Activated T-helper 2 cell treated with anti-CD3 and anti-CD28 coated beads, Interferon-gamma antibody, Interleukin-2, Interleukin-4, amounts not matched to agents 10 μg/mL and 5 μg/mL and 100 μg/mL, durations not matched to agents 14 hours and 24 hours and 36 hours (primary cell): ENCODE measurements at regions of chr14 and their contacts with region 1.

Region 1: DNA sequence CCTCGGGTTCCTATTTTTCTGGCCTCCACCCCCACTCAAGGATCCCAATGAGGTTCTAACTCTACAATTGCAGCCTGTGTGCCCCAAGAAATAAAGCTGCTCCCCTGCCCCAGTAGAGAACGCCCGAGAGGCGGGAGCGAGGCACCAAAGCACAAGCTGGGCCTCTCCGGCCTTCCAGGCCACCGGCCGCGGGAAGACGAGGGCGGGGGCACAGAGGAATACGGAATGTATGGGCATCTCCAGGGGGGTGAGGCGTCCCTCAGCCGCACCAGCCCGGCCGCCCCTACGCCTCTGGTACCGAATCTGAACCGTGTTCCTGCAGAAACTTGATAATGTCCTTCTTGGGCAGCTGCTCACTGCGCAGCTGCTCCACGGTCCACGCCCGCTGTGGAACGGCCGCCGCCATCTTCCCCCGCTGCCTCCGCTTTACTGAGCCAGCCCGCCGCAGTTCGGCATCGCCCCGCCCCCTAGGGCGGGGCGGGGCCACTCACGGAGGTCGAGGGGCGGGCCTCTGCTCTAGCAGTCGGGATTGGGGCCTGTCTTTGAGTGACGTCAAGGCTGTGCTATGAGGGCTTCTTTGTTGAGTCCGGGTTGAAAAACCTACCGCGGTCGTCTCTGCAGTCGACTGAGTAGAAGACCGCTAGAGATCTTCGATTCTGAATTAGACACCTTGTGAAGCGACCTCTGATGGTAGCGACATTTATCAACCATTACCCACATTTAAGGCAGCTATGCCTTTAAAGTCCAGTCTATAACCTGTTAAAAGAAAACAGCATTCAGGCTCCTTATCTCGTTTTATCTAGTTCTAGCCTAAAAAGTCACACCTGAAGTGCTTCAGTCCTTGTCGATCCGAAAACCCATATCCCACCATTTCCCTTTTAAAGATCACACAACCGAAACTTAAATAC is at the start of gene FKBP3:
- DNase-seq: peak; percentile 93
- H3K4me3 Mint-ChIP-seq: peak within 1 kb of the TSS; percentile 92
- H3K27ac Mint-ChIP-seq: peak within 1 kb of the TSS; percentile 98
- H3K4me1 Mint-ChIP-seq: peaks cover 30% of the 10 kb centered on the region
- H3K27me3 Mint-ChIP-seq: no peaks in the 10 kb centered on the region
- total RNA-seq, gene FKBP3: 78.7 and 79.1 TPM in 2 replicates

Region 2: DNA sequence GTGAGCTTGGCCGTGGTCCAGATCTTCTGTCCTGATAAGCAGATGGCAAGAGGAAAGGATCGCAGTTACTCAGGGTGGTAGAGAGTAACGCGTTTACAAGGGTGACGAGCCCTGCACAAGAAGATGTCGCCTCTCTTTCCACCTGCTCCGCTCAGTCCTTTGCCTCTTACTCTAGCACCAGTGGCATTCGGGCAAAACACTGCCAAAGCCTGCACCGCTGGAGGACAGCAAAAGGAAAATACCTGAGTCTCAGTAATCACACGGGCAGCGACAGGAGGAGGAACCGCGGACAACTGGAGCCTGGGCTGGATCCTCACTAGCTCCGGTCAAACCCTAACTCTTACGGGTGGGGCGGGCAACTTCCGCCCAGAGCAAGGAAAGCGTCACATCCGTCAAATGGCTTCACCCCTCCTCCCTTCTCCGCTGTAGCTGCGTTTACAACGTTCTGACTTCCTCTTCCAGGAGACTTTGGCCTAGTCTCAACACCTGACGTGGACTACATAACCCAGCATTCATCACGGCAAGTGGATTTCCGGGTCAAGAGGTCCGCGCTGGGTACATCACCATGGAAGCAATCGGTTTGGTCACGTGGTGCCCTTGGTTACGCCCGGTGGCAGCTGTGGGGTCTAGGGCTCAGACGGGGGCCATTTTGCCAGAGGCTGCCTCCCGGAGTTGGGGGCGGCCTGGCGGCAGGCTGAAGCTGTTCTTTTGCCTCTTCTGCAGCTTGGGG is 172.5 kb before region 1 on chr14 and contains the starts of genes KLHL28 and TOGARAM1:
- intact Hi-C with region 1: loop called (anchors 1 kb)
- DNase-seq: peak; percentile 95
- H3K4me3 Mint-ChIP-seq: no peak within 1 kb of the TSS
- H3K27ac Mint-ChIP-seq: no peak within 1 kb of the TSS
- H3K4me1 Mint-ChIP-seq: peaks cover 40% of the 10 kb centered on the region
- H3K27me3 Mint-ChIP-seq: no peaks in the 10 kb centered on the region
- total RNA-seq, gene KLHL28: 17.3 and 17.4 TPM in 2 replicates
- total RNA-seq, gene TOGARAM1: 7.3 and 11.1 TPM in 2 replicates

Region 3: DNA sequence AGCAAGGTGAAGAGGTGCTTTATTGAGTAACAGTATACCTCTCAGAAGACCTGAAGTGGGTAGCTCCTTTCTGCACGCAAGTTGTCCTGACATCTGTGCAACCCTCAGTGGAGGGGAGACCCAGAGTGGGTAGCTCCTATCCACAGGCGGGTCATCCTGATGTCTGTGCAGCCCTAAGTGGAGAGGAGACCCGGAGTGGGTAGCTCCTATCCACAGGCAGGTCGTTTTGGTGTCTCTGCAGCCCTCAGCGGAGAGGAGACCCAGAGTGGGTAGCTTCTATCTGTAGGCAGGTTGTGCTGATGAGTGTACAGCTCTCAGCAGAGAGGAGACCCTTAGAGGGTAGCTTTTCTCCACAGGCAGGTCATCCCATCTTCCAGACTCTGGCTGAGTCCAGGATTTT is 95.4 kb before region 1 on chr14:
- intact Hi-C with region 1: no loop called
- DNase-seq: no peak
- H3K4me3 Mint-ChIP-seq: no peak overlapping the region
- H3K27ac Mint-ChIP-seq: no peak overlapping the region
- H3K4me1 Mint-ChIP-seq: no peaks in the 10 kb centered on the region
- H3K27me3 Mint-ChIP-seq: no peaks in the 10 kb centered on the region

Region 4: GRCh38 chr14:45089813-45090212 is 44.5 kb before region 1 on chr14:
- intact Hi-C with region 1: loop called (anchors 1 kb)
- DNase-seq: no peak
- H3K4me3 Mint-ChIP-seq: no peak overlapping the region
- H3K27ac Mint-ChIP-seq: peak overlapping the region; percentile 64
- H3K4me1 Mint-ChIP-seq: peaks cover 57% of the 10 kb centered on the region
- H3K27me3 Mint-ChIP-seq: no peaks in the 10 kb centered on the region

Region 5: GRCh38 chr14:45201905-45202304 is 67.6 kb after region 1 on chr14:
- intact Hi-C with region 1: loop called (anchors 5 kb)
- DNase-seq: no peak
- H3K4me3 Mint-ChIP-seq: no peak overlapping the region
- H3K27ac Mint-ChIP-seq: peak overlapping the region; percentile 40
- H3K4me1 Mint-ChIP-seq: peaks cover 16% of the 10 kb centered on the region
- H3K27me3 Mint-ChIP-seq: no peaks in the 10 kb centered on the region

Region 6: DNA sequence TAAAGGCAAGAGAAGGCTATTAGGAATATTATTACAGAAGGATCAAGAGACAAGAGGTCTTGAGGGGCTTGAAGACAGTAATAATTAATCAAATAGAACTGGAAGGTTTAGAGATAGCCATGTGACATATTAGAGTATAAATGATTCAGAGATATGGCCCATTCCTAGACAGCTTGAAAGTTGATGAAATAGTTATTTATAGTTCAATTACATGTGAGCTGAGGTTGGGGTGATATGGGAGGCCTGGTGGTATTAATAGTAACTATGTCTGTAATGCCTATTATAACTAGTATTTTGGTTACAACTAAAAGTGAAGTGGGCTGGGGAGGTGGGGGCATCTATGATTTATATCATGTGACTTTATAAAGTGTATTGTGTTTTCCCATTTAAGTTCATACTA is 132.8 kb after region 1 on chr14:
- intact Hi-C with region 1: loop called (anchors 5 kb)
- DNase-seq: no peak
- H3K4me3 Mint-ChIP-seq: no peak overlapping the region
- H3K27ac Mint-ChIP-seq: no peak overlapping the region
- H3K4me1 Mint-ChIP-seq: peaks cover 3% of the 10 kb centered on the region
- H3K27me3 Mint-ChIP-seq: peaks cover 6% of the 10 kb centered on the region